ENCODE measurements at regions of chr9 and their contacts with region 1.

Region 1: DNA sequence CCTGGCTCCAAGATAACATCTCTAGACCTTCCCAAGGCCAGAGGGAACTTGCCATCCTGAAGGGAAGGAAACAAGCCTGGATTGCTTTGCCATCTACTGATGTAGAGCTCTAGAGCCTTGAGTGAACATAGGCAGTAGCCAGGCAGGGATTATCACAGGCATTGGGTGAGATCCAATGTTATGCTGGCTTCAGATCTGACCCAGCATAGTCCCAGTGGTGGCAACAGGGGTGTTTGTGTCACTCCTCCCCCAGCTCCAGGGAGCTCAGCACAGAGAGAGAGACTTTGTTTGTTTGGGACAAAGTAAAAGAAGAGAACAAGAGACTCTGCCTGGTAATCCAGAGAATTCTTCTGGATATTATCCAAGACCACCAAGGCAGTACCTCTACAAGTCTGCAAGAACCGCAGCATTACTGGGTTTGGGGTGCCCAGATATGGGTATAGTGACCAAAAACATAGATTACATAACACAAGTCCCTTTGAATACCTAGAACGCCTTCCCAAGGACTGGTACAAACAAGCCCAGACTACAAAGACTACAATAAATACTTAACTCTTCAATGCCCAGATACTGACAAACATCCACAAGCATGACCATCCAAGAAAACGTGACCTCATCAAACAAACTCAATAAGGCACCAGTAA is 137.6 kb upstream of the DAPK1 start:
- DNase-seq: no peak
- ATAC-seq: no peak
- H3K4me3 ChIP-seq: no peak overlapping the region
- H3K27ac ChIP-seq: no peak overlapping the region
- H3K4me1 ChIP-seq: no peaks in the 10 kb centered on the region
- H3K27me3 ChIP-seq: no peaks in the 10 kb centered on the region
- CTCF ChIP-seq: no peak
- POLR2A ChIP-seq: no peak
- RAD21 ChIP-seq: no peak

Region 2: GRCh38 chr9:88025399-88026117 is 665.5 kb after region 1 on chr9:
- CTCF ChIA-PET with region 1: no interaction called
- POLR2A ChIA-PET with region 1: no interaction called
- dilution Hi-C with region 1: no loop called
- in situ Hi-C with region 1: loop called (anchors 10 kb)
- intact Hi-C with region 1: no loop called
- DNase-seq: no peak
- ATAC-seq: no peak
- H3K4me3 ChIP-seq: no peak overlapping the region
- H3K27ac ChIP-seq: no peak overlapping the region
- H3K4me1 ChIP-seq: no peaks in the 10 kb centered on the region
- H3K27me3 ChIP-seq: peaks cover 2% of the 10 kb centered on the region; the same call in 1 of the 2 replicates
- CTCF ChIP-seq: no peak
- POLR2A ChIP-seq: no peak
- RAD21 ChIP-seq: no peak